ENCODE measurements at regions of chr1 and their contacts with region 1.

Region 1: DNA sequence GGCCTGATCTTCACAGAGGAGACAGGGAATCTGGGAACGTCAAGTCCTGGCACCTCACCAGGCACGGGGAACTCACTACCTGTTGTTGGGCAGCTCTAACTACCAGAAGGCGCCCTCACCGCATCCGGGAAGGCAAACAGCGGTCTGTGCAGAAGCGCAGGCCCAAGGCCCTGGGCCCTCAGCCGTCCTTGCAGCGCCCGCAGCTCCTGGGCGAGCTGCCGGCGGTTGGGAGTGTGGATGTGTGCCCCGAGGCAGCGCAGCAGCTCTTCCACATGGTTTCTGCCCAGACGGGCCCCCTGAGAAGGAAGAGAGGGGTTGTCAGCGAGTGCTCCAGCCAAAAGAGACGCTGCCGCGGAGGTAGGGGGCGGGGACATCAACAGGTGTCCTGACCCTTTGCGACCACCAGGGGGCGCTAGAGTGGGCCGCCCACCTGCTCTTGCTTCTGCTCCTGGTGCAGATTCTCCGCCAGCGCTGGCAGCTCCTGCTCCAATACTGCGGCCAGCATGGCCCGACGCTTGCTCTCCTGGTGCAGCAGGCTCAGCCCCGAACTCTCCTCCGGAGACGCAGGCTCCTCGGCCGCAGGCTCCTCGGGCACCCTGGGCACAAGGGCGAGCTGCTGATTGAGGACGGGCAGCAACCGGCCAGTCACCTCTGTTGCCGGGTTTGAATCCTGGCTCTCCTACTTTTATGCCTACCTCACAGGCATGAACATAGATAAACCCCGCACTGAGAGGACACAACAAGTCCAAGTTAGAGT is 9.3 kb downstream of the MAP3K6 start:
- DNase-seq: no peak
- H3K4me3 ChIP-seq: no peak overlapping the region
- CTCF ChIP-seq: peak; percentile 92

Region 2: DNA sequence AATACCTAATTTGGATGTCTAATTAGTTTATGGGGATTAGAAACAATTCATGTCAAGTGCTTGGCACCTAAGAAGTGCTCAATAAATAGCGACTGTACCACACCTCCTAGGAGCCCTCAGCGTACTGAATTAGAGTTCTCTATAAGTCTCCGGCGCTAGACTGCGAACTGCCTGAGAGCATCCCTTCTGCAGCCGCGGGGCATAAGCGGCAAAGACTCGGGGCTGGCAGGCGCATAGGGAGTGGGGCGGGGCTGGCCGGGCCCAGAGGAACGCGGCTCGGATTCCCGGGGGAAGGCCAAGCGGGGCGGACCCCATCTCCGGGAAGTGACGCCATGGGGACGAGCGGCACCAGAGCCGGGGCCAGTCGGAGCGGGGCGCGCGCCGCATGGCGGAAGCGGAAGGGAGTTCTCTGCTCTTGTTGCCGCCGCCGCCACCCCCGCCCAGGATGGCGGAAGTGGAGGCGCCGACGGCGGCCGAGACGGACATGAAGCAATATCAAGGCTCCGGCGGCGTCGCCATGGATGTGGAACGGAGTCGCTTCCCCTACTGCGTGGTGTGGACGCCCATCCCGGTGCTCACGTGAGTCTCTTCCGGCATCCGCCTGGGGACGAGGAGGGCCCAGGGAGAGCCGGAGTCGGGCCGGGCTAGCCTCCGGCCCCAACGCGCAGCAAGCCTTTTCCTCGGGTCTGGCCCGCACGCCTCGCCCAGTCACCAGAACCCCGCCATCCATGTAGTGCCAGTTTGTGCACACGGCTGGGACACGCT is 35.5 kb before region 1 on chr1 and contains the start of gene TMEM222:
- CTCF ChIA-PET with region 1: interaction called, 29 read pairs
- POLR2A ChIA-PET with region 1: no interaction called
- DNase-seq: peak; percentile 71
- H3K4me3 ChIP-seq: peak within 1 kb of the TSS; percentile 100
- CTCF ChIP-seq: peak; percentile 14

Region 3: DNA sequence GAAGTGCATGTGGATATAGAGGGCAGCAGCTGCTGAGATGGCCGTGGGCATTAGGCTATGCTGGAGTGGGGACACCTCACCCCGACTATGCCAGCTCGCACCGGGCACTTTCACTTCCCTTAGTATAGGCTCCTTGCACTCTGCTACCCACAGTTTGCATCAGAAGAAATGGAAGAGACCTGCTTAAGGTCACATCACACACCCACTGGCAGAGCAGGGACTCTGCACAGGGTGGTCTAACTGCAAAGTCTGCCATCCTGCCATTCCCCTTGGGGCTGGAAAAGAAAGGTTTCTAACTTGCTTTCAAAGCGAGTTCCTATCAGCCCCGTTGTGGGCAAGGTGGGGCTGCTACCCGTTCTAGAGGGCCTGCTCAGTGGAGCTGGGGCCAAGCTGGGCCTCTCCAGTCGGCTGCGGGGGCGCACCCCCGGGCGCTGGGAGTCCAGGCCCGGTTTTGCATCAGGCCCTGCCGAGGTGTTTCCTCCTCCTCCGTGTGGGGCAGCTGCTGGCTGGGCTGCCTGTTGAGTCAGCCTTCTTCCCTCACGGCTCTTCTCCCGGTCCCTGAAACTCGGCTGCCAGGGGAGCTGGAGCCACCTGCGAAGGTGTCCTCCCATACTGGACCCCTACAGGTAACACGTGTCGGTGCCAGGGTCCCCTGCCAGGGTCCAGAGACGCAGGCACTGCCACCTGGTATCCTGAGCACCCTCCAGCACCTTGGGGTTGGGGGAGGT is 15.8 kb before region 1 on chr1 and contains the start of gene SYTL1:
- CTCF ChIA-PET with region 1: interaction called, 100 read pairs
- POLR2A ChIA-PET with region 1: interaction called, 3 read pairs
- DNase-seq: no peak
- H3K4me3 ChIP-seq: peak within 1 kb of the TSS; percentile 33
- CTCF ChIP-seq: no peak

Region 4: GRCh38 chr1:27383039-27383605 is 25.7 kb after region 1 on chr1 and contains the start of gene CD164L2:
- CTCF ChIA-PET with region 1: interaction called, 30 read pairs
- POLR2A ChIA-PET with region 1: no interaction called
- DNase-seq: no peak
- H3K4me3 ChIP-seq: no peak within 1 kb of the TSS
- CTCF ChIP-seq: no peak

Region 5: DNA sequence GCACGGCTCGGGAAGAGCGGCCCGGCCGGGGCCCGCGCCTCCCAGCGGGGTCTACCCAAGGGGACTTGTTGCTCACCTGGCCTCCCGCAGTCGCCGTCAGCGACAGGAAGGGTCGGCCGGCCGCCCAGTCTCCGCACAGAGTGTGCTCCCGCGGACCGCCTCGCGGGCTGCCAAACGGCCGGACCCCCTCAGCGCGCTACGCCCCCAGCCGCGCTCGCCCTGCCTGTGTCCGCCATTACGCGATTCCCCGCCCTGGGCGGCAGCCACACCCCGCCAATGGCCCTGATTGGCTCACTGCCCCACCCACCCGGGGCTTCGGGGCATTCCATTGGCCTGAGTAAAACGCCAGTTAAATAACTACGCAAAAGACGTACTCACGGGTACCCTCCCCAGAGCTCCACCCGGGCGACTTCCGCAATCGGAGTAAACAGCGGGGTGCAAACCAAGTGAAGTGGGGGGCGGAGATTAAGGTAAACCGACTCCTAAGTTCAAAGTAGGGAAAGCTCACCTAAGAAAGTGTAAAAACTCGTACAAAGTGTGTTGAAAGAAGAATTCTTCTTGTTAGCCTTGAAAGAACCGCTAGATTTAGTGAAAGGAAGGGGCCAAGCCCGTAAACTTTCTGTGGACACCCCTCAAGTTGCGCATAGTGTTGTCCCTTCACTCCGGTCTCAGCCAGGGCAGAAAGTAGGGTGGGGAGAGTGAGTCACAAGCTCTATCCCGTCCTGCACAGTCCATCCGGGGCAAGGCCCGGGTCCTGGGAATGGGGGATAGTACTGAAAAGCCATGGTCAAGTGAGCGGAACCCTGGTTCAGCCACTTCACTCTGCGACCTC is 132.7 kb after region 1 on chr1 and contains the start of gene WASF2:
- CTCF ChIA-PET with region 1: no interaction called
- POLR2A ChIA-PET with region 1: no interaction called
- DNase-seq: peak; percentile 83
- H3K4me3 ChIP-seq: peak within 1 kb of the TSS; percentile 72
- CTCF ChIP-seq: no peak

Measured in AG04449 (cell line).